ENCODE measurements at regions of chr11 and their contacts with region 1.

Region 1: DNA sequence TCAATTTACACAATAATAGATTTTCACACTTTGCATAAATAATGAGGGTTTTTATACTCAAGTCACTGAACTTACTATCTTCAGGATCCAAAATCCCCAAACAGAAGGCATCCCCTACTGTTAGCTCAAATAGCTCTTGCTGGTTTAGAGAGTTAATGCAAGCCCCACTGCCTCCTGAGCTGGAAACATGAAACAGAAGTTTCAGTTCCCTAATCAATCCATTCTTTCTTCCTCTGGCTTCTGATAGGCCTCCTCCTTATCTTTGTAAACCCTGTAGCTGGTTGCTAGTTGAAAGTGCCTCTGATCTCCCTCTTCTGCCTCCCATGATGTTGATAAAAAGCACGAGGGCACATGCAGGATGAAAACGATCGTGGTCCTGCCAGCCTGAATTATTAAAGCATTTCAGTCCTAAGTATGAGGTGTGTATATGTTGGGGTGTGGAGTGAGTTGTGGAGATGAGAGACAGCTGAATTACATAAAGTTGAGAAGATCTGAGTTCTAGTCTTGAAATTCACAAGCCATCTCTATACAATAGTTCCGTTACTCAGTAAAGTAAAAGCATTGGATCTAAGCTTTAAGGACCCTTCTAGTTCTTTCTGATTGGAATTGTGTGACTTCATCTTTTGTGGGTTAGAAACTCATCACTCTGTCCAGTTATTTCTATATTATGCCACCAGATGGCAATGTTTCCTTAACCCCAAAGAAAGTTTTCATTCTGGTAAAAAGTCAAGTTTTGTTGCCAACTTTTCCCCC is 35.0 kb upstream of the EHF start:
- DNase-seq: no peak
- ATAC-seq: peak; percentile 69 to 85
- H3K4me3 ChIP-seq: no peak overlapping the region
- H3K27ac ChIP-seq: no peak overlapping the region
- H3K4me1 ChIP-seq: peaks cover 4% of the 10 kb centered on the region
- H3K27me3 ChIP-seq: no peaks in the 10 kb centered on the region
- CTCF ChIP-seq: peak; percentile 65

Region 2: GRCh38 chr11:34438529-34439507 is 147.1 kb before region 1 on chr11 and contains the start of gene CAT:
- intact Hi-C with region 1: no loop called
- DNase-seq: peak; percentile 99
- ATAC-seq: peak; percentile 97 to 99
- H3K4me3 ChIP-seq: peak within 1 kb of the TSS; percentile 76
- H3K27ac ChIP-seq: peak within 1 kb of the TSS; percentile 95
- H3K4me1 ChIP-seq: peaks cover 55% of the 10 kb centered on the region
- H3K27me3 ChIP-seq: no peaks in the 10 kb centered on the region
- CTCF ChIP-seq: no peak
- total RNA-seq, gene CAT: 259 TPM

Region 3: DNA sequence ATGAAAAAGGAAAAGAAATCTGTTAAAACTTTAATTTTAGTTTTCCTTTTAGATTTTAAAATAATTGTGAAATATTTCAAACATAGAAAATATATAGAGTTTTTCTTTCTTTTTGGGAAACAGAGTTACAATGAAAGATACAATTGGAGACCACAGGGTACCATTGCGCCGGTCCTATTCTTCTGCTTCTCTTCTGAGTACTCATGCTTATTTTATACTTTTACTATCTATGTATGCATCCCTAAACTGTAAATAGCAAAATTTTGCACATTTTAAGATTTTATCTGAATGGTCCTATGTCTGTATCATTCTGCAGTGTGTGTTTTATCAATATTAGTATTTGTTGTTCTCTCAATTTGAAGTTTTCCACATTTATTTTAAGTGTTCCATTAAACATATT is 100.0 kb after region 1 on chr11:
- intact Hi-C with region 1: no loop called
- DNase-seq: no peak
- ATAC-seq: no peak
- H3K4me3 ChIP-seq: no peak overlapping the region
- H3K27ac ChIP-seq: no peak overlapping the region
- H3K4me1 ChIP-seq: no peaks in the 10 kb centered on the region
- H3K27me3 ChIP-seq: no peaks in the 10 kb centered on the region
- CTCF ChIP-seq: no peak

Region 4: GRCh38 chr11:34890812-34891211 is 304.9 kb after region 1 on chr11:
- intact Hi-C with region 1: loop called (anchors 5 kb)
- DNase-seq: no peak
- ATAC-seq: peak in 1 of 2 donors; percentile 64
- H3K4me3 ChIP-seq: no peak overlapping the region
- H3K27ac ChIP-seq: no peak overlapping the region
- H3K4me1 ChIP-seq: no peaks in the 10 kb centered on the region
- H3K27me3 ChIP-seq: no peaks in the 10 kb centered on the region
- CTCF ChIP-seq: peak; percentile 43